Activated CD8-positive, alpha-beta T cell treated with anti-CD3 and anti-CD28 coated beads for 36 hours (primary cell): ENCODE measurements at regions of chr11 and their contacts with region 1.

Region 1: DNA sequence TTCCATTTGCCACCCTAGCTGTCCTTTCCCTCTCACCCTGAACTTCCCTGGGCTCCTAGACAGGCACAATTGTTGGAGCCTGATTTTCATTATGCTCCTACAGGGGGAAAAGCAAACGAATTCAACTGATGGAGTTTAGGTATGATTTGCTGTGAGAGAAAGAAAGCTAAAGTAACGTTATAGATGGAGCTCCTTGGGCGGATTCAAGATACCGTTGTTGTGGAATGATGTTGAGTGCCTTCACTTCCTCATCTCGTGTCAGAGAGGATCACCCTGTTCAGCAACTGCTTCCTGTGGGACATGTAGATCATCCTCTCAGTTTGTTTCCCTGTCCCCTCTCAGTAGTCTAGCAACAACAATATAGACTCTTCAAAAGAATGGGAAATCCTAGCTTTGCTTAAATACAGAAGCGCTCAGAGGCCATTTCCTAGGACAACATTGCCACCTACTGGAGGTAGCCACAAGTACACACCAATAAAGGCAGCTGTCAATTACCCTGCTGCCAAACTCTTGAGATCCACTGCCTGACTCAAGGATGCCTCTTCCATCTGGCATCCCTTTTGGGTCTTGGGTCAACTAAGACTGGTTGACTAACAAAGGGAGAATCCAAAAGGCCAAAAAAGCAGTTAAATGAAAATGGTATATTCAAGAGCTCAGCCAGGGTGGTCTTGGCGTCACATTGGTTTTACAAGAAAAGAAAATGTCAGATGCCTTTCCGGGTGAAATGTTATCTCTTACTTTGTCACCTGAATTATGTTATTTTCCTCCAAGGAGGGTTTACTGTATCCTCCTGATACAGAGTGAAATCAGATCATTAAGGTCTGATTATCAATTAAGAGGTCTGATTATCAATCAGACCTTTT is 13.5 kb upstream of the DTX4 start:
- DNase-seq: peak; percentile 78
- ATAC-seq: peak; percentile 97
- H3K4me3 Mint-ChIP-seq: no peak overlapping the region
- H3K27ac Mint-ChIP-seq: no peak overlapping the region
- H3K4me1 Mint-ChIP-seq: peaks cover 4% of the 10 kb centered on the region
- H3K27me3 Mint-ChIP-seq: peaks cover 10% of the 10 kb centered on the region
- CTCF ChIP-seq: peak; percentile 85

Region 2: GRCh38 chr11:59030037-59030436 is 128.4 kb before region 1 on chr11:
- CTCF ChIA-PET with region 1: no interaction called
- POLR2A ChIA-PET with region 1: no interaction called
- intact Hi-C with region 1: no loop called
- DNase-seq: no peak
- ATAC-seq: no peak
- H3K4me3 Mint-ChIP-seq: no peak overlapping the region
- H3K27ac Mint-ChIP-seq: no peak overlapping the region
- H3K4me1 Mint-ChIP-seq: no peaks in the 10 kb centered on the region
- H3K27me3 Mint-ChIP-seq: peaks cover 16% of the 10 kb centered on the region
- CTCF ChIP-seq: no peak

Region 3: GRCh38 chr11:59053387-59053786 is 105.0 kb before region 1 on chr11:
- CTCF ChIA-PET with region 1: interaction called, 38 read pairs
- POLR2A ChIA-PET with region 1: no interaction called
- intact Hi-C with region 1: loop called (anchors 2 kb)
- DNase-seq: peak; percentile 88
- ATAC-seq: peak; percentile 64
- H3K4me3 Mint-ChIP-seq: no peak overlapping the region
- H3K27ac Mint-ChIP-seq: no peak overlapping the region
- H3K4me1 Mint-ChIP-seq: peaks cover 3% of the 10 kb centered on the region
- H3K27me3 Mint-ChIP-seq: peaks cover 17% of the 10 kb centered on the region
- CTCF ChIP-seq: peak; percentile 65

Region 4: DNA sequence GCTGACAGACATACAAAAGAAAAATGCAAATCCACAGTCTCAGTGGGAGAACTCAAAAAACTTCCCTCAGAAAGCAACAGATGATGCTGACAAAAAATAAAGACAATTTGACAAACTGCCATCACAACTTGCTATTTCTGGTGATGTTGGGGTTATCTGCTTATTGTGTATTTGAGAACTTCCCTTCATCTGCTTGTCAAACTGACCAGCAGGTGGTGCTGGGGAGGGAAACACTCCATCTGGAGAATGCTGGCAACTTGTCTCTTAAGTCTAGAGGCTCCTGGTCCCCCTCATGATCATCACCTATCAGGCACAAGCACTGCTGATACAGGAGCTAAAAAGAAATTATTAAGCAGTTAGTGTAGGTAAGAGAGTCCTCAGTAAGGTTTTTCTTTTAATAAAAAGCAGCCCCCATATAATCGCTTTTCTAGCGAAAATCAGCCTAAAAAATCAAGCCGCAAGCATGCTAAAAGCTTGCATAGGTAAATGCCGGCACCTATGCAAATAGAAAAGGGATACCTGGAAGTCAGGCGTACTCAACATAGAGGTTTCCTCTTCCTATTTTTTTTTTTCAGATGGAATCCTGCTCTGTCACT is 61.2 kb before region 1 on chr11:
- CTCF ChIA-PET with region 1: interaction called, 44 read pairs
- POLR2A ChIA-PET with region 1: no interaction called
- intact Hi-C with region 1: loop called (anchors 5 kb)
- DNase-seq: peak; percentile 82
- ATAC-seq: peak; percentile 80
- H3K4me3 Mint-ChIP-seq: no peak overlapping the region
- H3K27ac Mint-ChIP-seq: no peak overlapping the region
- H3K4me1 Mint-ChIP-seq: peaks cover 3% of the 10 kb centered on the region
- H3K27me3 Mint-ChIP-seq: peaks cover 31% of the 10 kb centered on the region
- CTCF ChIP-seq: peak; percentile 76

Region 5: DNA sequence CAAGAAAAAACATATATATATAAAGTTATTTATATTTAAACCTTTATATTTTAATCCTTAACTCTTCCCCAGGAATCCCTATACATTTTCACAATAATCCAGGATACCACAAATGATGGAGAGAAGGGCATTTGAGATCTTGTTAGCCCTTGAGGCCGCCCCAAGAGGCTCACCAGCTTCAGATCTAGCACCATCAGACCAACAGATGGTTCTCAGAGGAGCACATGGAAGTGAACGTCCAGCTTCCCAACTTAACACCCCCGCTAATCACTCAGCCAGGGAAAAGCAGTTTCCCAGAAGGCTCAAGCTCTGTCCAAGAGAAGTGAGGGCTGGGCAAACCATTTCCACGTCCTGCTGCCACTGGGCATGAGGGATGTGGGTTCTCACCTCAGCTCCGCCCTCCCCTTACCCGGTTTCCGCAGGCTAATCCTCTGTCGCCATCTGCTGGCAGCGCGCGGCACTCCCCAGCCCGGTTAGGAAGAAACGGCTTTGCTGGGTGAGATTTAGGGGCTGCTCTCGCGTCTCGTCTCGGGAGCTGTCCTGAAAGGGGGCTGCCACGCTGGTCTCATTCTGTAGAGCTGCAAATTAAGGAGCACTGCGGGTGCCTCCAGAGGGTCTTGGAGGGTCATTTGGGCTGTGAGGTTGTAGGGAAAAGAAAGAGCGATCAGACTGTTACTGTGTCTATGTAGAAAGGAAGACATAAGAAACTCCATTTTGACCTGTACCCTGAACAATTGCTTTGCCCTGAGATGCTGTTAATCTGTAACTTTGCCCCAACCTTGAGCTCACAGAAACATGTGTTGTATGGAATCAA is 22.6 kb before region 1 on chr11:
- CTCF ChIA-PET with region 1: interaction called, 143 read pairs
- POLR2A ChIA-PET with region 1: no interaction called
- intact Hi-C with region 1: no loop called
- DNase-seq: peak; percentile 93
- ATAC-seq: peak; percentile 100
- H3K4me3 Mint-ChIP-seq: no peak overlapping the region
- H3K27ac Mint-ChIP-seq: no peak overlapping the region
- H3K4me1 Mint-ChIP-seq: peaks cover 8% of the 10 kb centered on the region
- H3K27me3 Mint-ChIP-seq: no peaks in the 10 kb centered on the region
- CTCF ChIP-seq: peak; percentile 93

Region 6: GRCh38 chr11:59171508-59172322 is 13.3 kb after region 1 on chr11 and contains the start of gene DTX4:
- CTCF ChIA-PET with region 1: interaction called, 35 read pairs
- POLR2A ChIA-PET with region 1: no interaction called
- intact Hi-C with region 1: no loop called
- DNase-seq: peak; percentile 94
- ATAC-seq: peak; percentile 90
- H3K4me3 Mint-ChIP-seq: peak within 1 kb of the TSS; percentile 72
- H3K27ac Mint-ChIP-seq: no peak within 1 kb of the TSS
- H3K4me1 Mint-ChIP-seq: peaks cover 9% of the 10 kb centered on the region
- H3K27me3 Mint-ChIP-seq: peaks cover 13% of the 10 kb centered on the region
- CTCF ChIP-seq: peak; percentile 86
- total RNA-seq, gene DTX4: 0.16 to 0.29 TPM

Region 7: DNA sequence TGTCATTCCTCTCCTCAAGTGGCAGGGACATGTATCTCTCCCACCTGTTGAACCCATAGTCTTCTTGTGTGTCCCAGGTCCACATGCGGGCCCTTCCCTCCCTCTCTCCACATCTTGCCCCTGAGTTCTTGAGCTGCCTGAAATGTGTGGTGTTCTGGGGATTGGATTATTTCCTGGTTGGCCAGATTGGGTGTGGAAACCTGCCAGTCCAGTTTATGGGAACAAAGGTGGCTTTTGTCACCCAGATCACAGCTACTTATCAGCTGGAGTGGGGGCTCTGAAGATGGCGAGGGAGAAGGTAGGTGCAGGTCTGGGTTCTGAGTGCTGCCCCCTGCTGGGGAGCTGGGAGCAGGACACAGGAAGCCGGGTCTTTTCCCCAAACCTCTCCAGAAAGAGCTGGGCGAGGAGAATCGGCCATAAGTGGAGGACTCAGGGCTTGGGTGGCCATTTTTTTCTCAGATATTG is 27.7 kb after region 1 on chr11:
- CTCF ChIA-PET with region 1: interaction called, 15 read pairs
- POLR2A ChIA-PET with region 1: no interaction called
- intact Hi-C with region 1: no loop called
- DNase-seq: peak; percentile 65
- ATAC-seq: peak; percentile 89
- H3K4me3 Mint-ChIP-seq: no peak overlapping the region
- H3K27ac Mint-ChIP-seq: no peak overlapping the region
- H3K4me1 Mint-ChIP-seq: peaks cover 2% of the 10 kb centered on the region
- H3K27me3 Mint-ChIP-seq: peaks cover 2% of the 10 kb centered on the region
- CTCF ChIP-seq: peak; percentile 78

Region 8: GRCh38 chr11:59240322-59240721 is 81.9 kb after region 1 on chr11:
- CTCF ChIA-PET with region 1: no interaction called
- POLR2A ChIA-PET with region 1: no interaction called
- intact Hi-C with region 1: no loop called
- DNase-seq: no peak
- ATAC-seq: no peak
- H3K4me3 Mint-ChIP-seq: no peak overlapping the region
- H3K27ac Mint-ChIP-seq: no peak overlapping the region
- H3K4me1 Mint-ChIP-seq: no peaks in the 10 kb centered on the region
- H3K27me3 Mint-ChIP-seq: peaks cover 1% of the 10 kb centered on the region
- CTCF ChIP-seq: no peak